Activated naive CD4-positive, alpha-beta T cell treated with anti-CD3 and anti-CD28 coated beads, Interleukin-2, amount 10 ng/mL, durations not matched to agents 7 days and 5 days (primary cell): ENCODE measurements at regions of chr1 and their contacts with region 1.

Region 1: GRCh38 chr1:160098852-160099561 is 588 bp upstream of the IGSF8 start:
- DNase-seq: peak; percentile 99
- H3K4me3 Mint-ChIP-seq: peak overlapping the region; percentile 71
- H3K27ac Mint-ChIP-seq: peak overlapping the region; percentile 93
- H3K4me1 Mint-ChIP-seq: peaks cover 53% of the 10 kb centered on the region
- H3K27me3 Mint-ChIP-seq: peaks cover 7% of the 10 kb centered on the region

Region 2: DNA sequence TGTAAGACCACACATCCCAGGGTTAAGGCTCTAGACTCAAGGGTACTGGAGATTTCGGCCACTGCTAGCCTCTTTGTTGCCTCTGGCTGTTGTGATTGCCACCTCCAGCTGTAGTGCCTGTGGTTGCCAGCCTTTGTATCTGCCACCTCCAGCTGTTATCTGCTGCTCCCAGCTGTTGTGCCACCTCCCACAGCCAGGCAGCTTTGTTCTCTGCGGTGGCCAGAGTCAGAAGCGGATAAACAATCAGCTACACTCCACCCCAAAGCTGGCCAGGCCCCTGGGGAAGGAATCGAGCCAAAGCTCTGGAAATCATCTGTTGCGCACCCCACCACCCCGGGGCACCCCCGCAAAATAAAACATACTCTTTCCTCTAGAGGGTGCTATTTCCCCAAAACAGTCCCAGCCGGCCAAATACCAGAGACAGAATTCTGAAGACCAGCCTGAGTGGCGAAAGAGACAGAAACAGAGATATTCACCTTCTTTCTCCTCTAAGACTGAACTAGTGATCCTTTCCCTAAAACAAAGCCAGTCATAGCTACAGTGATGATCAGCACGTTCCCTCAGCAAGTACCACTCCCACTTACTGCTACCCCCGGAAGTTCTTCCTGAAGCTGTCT is 52.4 kb before region 1 on chr1:
- CTCF ChIA-PET with region 1: interaction called, 23 read pairs
- DNase-seq: peak; percentile 46
- H3K4me3 Mint-ChIP-seq: peak overlapping the region; percentile 60
- H3K27ac Mint-ChIP-seq: peak overlapping the region; percentile 34
- H3K4me1 Mint-ChIP-seq: peaks cover 14% of the 10 kb centered on the region
- H3K27me3 Mint-ChIP-seq: peaks cover 33% of the 10 kb centered on the region

Region 3: GRCh38 chr1:160078512-160079195 is 20.4 kb before region 1 on chr1:
- CTCF ChIA-PET with region 1: interaction called, 11 read pairs
- DNase-seq: peak; percentile 78
- H3K4me3 Mint-ChIP-seq: no peak overlapping the region
- H3K27ac Mint-ChIP-seq: no peak overlapping the region
- H3K4me1 Mint-ChIP-seq: no peaks in the 10 kb centered on the region
- H3K27me3 Mint-ChIP-seq: peaks cover 72% of the 10 kb centered on the region

Region 4: GRCh38 chr1:160085686-160086455 is 13.1 kb before region 1 on chr1:
- CTCF ChIA-PET with region 1: interaction called, 60 read pairs
- DNase-seq: peak; percentile 85
- H3K4me3 Mint-ChIP-seq: no peak overlapping the region
- H3K27ac Mint-ChIP-seq: no peak overlapping the region
- H3K4me1 Mint-ChIP-seq: peaks cover 12% of the 10 kb centered on the region
- H3K27me3 Mint-ChIP-seq: peaks cover 32% of the 10 kb centered on the region

Region 5: DNA sequence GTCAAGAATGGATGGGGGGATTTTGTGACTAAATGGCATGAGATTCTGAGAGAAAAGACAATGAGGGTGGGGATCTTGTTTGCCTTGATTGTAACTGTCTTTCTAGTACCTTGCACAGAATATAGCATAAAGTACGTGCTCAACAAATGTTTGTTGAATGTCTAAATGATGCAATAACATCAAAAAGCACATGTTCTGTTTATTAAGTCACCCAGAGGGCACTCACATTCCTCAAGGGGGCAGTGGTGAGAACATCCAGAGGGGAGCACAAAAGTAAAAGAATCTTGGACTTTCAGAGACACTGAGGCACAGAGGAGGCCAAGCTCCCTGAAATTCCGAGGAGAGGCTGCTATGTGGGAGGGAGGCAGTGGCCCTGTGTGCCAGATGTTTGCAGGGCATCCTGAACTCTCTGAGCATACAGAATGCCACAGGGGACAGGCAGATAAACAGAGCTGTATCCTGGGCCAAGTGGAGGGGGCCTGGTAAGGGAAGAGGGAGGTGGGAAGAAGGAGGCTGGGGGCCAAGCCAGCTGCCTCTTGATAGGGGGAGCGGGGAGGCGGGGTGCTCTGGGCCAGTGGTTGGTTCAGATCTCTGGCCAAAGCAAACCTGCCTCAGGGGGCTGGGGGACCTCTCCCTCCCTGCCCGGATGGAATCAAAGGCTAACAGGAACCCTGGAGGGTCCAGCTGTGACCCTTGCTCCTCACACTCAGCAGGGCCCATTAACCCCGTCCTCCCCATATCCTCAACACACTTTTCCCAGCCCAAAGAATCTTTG is 10.1 kb after region 1 on chr1:
- CTCF ChIA-PET with region 1: interaction called, 10 read pairs
- DNase-seq: peak; percentile 59
- H3K4me3 Mint-ChIP-seq: no peak overlapping the region
- H3K27ac Mint-ChIP-seq: peak overlapping the region; percentile 43
- H3K4me1 Mint-ChIP-seq: no peaks in the 10 kb centered on the region
- H3K27me3 Mint-ChIP-seq: peaks cover 49% of the 10 kb centered on the region

Region 6: GRCh38 chr1:160376525-160377131 is 277.6 kb after region 1 on chr1:
- CTCF ChIA-PET with region 1: interaction called, 35 read pairs
- DNase-seq: peak; percentile 44
- H3K4me3 Mint-ChIP-seq: no peak overlapping the region
- H3K27ac Mint-ChIP-seq: no peak overlapping the region
- H3K4me1 Mint-ChIP-seq: peaks cover 12% of the 10 kb centered on the region
- H3K27me3 Mint-ChIP-seq: peaks cover 35% of the 10 kb centered on the region

Region 7: GRCh38 chr1:160421881-160422280 is 322.9 kb after region 1 on chr1:
- CTCF ChIA-PET with region 1: no interaction called
- DNase-seq: no peak
- H3K4me3 Mint-ChIP-seq: no peak overlapping the region
- H3K27ac Mint-ChIP-seq: no peak overlapping the region
- H3K4me1 Mint-ChIP-seq: peaks cover 2% of the 10 kb centered on the region
- H3K27me3 Mint-ChIP-seq: peaks cover 42% of the 10 kb centered on the region